ENCODE measurements at regions of chr1 and their contacts with region 1.

Region 1: GRCh38 chr1:50774759-50775351 is 185.2 kb downstream of the FAF1 start:
- DNase-seq: no peak
- H3K4me3 Mint-ChIP-seq: no peak overlapping the region
- H3K27ac Mint-ChIP-seq: no peak overlapping the region
- H3K4me1 Mint-ChIP-seq: no peaks in the 10 kb centered on the region
- H3K27me3 Mint-ChIP-seq: no peaks in the 10 kb centered on the region

Region 2: DNA sequence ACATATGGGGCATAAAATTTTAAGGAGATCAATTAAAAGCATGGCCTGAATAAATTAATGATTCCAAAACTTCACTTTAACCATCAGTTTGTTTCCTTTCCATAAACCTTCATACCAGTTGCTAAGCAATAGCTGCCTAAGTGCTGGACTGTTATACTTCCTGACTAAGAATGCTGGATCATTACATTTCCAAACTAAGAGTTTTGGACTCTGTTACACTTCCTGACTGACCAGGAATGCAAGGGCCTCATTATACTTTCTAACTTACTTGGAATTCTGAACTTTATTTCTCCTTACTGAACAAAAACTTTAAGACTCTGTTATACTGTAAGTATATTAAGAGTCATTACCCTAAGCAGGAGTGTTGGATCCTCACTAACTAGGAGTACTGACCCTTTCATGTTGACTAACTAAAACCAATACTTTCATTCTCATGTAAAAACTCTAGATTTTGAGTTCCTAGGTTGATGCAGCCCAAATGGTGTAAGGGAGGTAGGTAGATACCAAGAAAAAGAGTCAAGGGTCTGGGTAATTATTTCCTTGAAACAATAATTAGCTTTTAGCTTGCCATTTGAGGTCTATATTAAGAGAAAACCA is 67.0 kb after region 1 on chr1:
- intact Hi-C with region 1: no loop called
- DNase-seq: no peak
- H3K4me3 Mint-ChIP-seq: no peak overlapping the region
- H3K27ac Mint-ChIP-seq: no peak overlapping the region
- H3K4me1 Mint-ChIP-seq: peaks cover 13% of the 10 kb centered on the region
- H3K27me3 Mint-ChIP-seq: no peaks in the 10 kb centered on the region

Region 3: DNA sequence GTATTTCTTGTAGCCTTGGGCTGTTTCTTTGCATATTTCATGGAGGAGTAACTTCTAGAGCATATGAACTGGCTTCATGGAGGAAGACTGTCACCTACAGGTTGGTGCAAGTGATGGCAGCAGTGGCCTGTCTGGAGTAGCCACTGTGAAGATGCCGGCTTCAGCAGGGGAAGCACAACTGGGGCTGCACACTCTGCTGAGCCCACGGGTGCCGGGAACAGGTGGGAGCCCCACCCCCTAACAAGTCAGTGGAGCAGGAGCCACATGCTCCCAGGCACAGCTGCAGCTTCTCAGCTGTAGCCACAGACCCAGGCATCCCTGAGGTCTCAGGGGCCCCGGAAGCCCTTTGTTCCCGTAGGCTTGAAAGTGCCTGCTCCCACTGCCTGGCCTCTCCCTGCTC is 284.0 kb after region 1 on chr1:
- intact Hi-C with region 1: loop called (anchors 5 kb)
- DNase-seq: no peak
- H3K4me3 Mint-ChIP-seq: no peak overlapping the region
- H3K27ac Mint-ChIP-seq: no peak overlapping the region
- H3K4me1 Mint-ChIP-seq: no peaks in the 10 kb centered on the region
- H3K27me3 Mint-ChIP-seq: peaks cover 2% of the 10 kb centered on the region

Region 4: GRCh38 chr1:51192213-51192843 is 417.5 kb after region 1 on chr1:
- intact Hi-C with region 1: loop called (anchors 1 kb)
- DNase-seq: peak; percentile 19
- H3K4me3 Mint-ChIP-seq: no peak overlapping the region
- H3K27ac Mint-ChIP-seq: no peak overlapping the region
- H3K4me1 Mint-ChIP-seq: no peaks in the 10 kb centered on the region
- H3K27me3 Mint-ChIP-seq: peaks cover 17% of the 10 kb centered on the region